ENCODE measurements at regions of chr1 and their contacts with region 1.

Region 1: DNA sequence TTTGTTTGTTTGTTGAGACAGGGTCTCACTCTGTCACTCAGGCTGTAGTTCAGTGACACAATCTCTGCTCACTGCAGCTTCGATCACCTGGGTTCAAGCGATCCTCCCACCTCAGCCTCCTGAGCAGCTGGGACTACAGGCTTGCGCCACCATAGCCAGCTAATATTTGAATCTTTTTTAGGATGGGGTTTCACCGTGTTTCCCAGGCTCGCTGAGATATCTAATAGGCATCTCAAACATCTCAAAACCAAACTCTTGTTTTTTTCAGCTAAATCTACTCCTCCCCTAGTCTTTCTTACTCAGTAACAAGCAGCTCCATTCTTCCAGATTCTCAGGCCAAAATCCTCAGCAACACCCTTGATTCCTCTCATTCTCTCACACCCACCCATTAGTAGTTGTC is 22.0 kb upstream of the SRRM1 start:
- DNase-seq: no peak
- ATAC-seq: no peak
- H3K4me3 ChIP-seq: no peak overlapping the region
- H3K27ac ChIP-seq: no peak overlapping the region
- H3K4me1 ChIP-seq: no peaks in the 10 kb centered on the region
- H3K27me3 ChIP-seq: peaks cover 0 to 10% (median 0%) of the 10 kb centered on the region in 9 donors
- CTCF ChIP-seq: no peak
- POLR2A ChIP-seq: no peak

Region 2: GRCh38 chr1:24329797-24330543 is 291.2 kb before region 1 on chr1:
- intact Hi-C with region 1: no loop called
- DNase-seq: no peak
- ATAC-seq: no peak
- H3K4me3 ChIP-seq: no peak overlapping the region
- H3K27ac ChIP-seq: no peak overlapping the region
- H3K4me1 ChIP-seq: no peaks in the 10 kb centered on the region
- H3K27me3 ChIP-seq: no peaks in the 10 kb centered on the region
- CTCF ChIP-seq: no peak
- POLR2A ChIP-seq: no peak

Region 3: DNA sequence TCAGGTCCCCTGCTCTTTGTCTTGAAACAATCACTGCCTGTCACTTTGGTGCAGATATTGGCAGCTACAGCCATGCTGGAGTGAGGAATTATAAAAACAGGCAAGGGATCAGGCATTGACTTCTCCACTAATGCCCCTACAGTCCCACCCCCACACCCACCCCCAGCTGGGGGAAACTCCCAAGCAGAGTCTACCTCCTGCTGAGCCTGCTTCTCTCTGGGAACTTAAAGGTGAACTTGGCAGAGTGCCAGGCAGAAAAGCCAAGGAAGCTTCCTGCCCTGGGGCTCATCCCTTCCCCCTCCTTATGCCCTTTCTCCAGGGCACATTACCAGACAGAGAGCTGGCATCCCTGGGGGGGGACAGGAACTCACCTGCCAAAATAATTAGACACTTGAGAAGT is 58.5 kb before region 1 on chr1:
- intact Hi-C with region 1: loop called in 1 of 10 experiments (anchors 5 kb)
- DNase-seq: no peak
- ATAC-seq: no peak
- H3K4me3 ChIP-seq: no peak overlapping the region
- H3K27ac ChIP-seq: no peak overlapping the region
- H3K4me1 ChIP-seq: peaks cover 0 to 11% (median 0%) of the 10 kb centered on the region in 12 donors
- H3K27me3 ChIP-seq: peaks cover 0 to 3% (median 0%) of the 10 kb centered on the region in 9 donors
- CTCF ChIP-seq: no peak
- POLR2A ChIP-seq: no peak